IMR-90 (cell line): ENCODE measurements at regions of chr1 and their contacts with region 1.

Region 1: DNA sequence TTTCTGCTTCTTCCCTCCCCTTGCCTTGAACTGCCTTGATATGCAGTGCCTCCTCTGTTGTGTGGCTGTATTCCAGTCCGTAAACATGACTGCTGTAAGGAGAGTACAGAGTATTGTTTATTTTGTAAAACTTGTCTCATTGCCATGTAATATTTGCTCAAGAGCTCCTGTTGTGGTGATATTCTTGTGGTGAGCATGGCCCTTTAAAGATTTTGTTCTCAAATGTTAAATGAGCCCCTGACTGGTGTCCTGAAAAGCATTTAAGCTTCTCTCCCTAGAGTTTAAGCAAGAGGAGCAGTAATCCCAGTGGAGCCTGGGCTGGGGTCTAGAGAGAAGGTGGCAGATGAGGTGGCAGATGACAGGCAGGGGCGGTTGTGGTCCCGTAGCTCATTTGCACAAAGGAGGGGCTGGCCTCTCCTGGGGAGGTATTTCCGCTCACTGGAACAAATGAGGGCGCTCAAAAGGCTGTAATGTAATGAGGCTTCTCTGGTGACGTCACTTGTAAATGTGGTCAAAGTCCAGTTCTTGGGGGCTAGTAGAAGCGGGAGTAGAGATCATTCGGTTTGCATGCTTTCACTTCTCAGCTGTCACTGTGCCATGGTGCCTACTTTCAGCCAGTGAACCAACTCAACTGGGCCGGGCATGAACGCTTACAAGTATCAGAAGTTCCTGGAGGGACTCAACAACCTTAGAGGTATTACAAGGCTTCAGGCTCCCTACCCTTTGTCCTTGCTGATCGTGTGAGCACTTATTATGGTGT is 46.0 kb upstream of the MACF1 start:
- DNase-seq: peak; percentile 74
- ATAC-seq: peak; percentile 61
- H3K4me3 ChIP-seq: peak overlapping the region; percentile 34; the same call in 1 of the 2 replicates
- H3K27ac ChIP-seq: peak overlapping the region; percentile 88
- H3K4me1 ChIP-seq: peaks cover 38% of the 10 kb centered on the region
- H3K27me3 ChIP-seq: no peaks in the 10 kb centered on the region
- CTCF ChIP-seq: no peak; the same call in 1 of the 2 replicates
- POLR2A ChIP-seq: no peak
- RAD21 ChIP-seq: no peak

Region 2: GRCh38 chr1:37958690-37959089 is 1199.8 kb before region 1 on chr1:
- CTCF ChIA-PET with region 1: no interaction called
- POLR2A ChIA-PET with region 1: interaction called, 13 read pairs
- dilution Hi-C with region 1: no loop called
- in situ Hi-C with region 1: no loop called
- intact Hi-C with region 1: no loop called
- DNase-seq: peak; percentile 93
- ATAC-seq: peak; percentile 96
- H3K4me3 ChIP-seq: no peak overlapping the region
- H3K27ac ChIP-seq: peak overlapping the region; percentile 54
- H3K4me1 ChIP-seq: peaks cover 6% of the 10 kb centered on the region; the same call in 1 of the 2 replicates
- H3K27me3 ChIP-seq: no peaks in the 10 kb centered on the region
- CTCF ChIP-seq: no peak
- POLR2A ChIP-seq: no peak
- RAD21 ChIP-seq: no peak